Dendritic cell treated with granulocyte-macrophage colony-stimulating factor and Interleukin-4, amounts not matched to agents 40 ng/mL and 50 ng/mL, for 4 days (primary cell): ENCODE measurements at regions of chr16 and their contacts with region 1.

Region 1: DNA sequence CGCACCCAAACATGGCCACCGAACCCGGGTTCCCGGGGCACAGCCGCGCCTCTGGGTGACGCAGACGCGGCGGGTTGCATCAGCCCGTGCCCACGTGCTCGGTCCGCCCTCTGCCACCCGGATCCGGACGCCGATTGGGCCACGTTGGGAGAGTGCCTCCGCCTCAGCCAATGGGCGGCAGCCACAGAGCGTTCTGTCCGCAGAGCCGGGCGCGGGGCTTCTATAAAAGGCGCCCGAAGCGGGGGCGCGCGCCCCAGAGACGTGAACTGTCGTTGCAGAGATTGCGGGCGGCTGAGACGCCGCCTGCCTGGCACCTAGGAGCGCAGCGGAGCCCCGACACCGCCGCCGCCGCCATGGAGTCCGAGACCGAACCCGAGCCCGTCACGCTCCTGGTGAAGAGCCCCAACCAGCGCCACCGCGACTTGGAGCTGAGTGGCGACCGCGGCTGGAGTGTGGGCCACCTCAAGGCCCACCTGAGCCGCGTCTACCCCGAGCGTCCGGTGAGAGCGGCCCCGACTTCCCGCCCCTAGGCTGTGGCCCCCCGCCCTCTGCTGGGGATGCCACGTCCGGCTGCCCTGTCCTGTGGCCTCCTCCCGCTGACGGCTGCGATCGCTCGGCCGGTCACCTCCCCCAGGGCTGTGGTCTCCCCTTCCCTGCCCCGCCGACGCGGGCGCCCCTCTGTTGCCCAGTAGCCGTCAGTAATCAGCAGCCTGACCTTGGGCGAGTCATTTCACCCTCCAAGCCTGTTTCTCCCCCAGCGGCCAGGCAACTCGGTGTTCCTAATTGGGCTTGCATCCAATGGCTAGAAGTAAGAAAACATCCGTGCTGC is at the start of gene HERPUD1:
- H3K4me3 Mint-ChIP-seq: peak within 1 kb of the TSS; percentile 99
- H3K27ac Mint-ChIP-seq: peak within 1 kb of the TSS; percentile 100
- H3K4me1 Mint-ChIP-seq: peaks cover 27% of the 10 kb centered on the region
- H3K27me3 Mint-ChIP-seq: no peaks in the 10 kb centered on the region

Region 2: GRCh38 chr16:56729735-56730662 is 202.1 kb before region 1 on chr16 and contains the start of gene NUP93:
- intact Hi-C with region 1: loop called (anchors 10 kb)
- H3K4me3 Mint-ChIP-seq: peak within 1 kb of the TSS; percentile 96
- H3K27ac Mint-ChIP-seq: no peak within 1 kb of the TSS
- H3K4me1 Mint-ChIP-seq: peaks cover 17% of the 10 kb centered on the region
- H3K27me3 Mint-ChIP-seq: no peaks in the 10 kb centered on the region

Region 3: DNA sequence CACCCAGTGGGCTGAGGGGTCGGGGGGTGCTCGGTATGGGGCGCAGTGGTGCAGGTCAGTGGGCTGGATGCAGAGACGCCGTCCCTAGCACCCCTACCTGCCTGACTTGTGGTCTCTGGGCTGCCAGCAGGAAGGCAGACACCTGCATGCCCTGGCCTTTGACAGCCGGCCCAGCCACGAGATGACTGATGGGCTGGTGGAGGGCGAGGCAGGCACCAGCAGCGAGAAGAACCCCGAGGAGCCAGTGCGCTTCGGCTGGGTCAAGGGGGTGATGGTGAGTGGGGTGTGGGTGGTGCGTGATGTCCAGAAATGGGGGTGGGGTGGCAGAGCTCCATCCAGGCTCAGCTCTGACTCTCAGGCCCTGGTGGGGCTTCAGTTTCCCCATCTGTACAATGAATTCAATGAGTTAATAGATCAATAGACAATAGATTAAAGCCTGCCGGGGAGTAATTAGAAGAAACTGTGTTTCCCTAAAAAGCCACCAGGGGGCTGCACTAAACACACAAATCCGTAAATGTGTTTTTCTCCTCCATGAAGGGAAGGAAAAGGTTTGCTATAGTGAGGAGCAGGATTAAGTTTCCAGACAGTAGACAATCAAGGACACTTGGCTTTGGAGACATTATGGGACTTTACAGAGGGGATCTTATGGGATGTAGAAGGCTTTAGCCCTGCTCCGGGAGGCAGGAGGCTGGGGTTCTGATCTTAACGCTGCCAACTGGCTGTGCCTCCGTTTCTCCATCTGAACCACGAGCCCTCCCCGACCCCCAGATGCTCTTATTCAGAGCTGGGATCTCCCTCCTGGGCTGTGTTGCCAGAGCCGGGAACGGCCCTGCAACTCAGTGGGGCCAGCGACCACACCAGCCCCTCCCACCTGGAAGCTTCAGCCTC is 64.9 kb before region 1 on chr16:
- intact Hi-C with region 1: loop called (anchors 1 kb)
- H3K4me3 Mint-ChIP-seq: no peak overlapping the region
- H3K27ac Mint-ChIP-seq: no peak overlapping the region
- H3K4me1 Mint-ChIP-seq: peaks cover 65% of the 10 kb centered on the region
- H3K27me3 Mint-ChIP-seq: peaks cover 27% of the 10 kb centered on the region

Region 4: GRCh38 chr16:56911771-56912571 is 20.1 kb before region 1 on chr16:
- intact Hi-C with region 1: loop called (anchors 1 kb)
- H3K4me3 Mint-ChIP-seq: peak overlapping the region; percentile 15
- H3K27ac Mint-ChIP-seq: peak overlapping the region; percentile 84
- H3K4me1 Mint-ChIP-seq: peaks cover 59% of the 10 kb centered on the region
- H3K27me3 Mint-ChIP-seq: peaks cover 23% of the 10 kb centered on the region